Right ventricle myocardium superior (tissue), 1 donor: ENCODE measurements at regions of chr20 and their contacts with region 1.

Region 1: GRCh38 chr20:13765299-13765698 is 19.4 kb downstream of the ESF1 start:
- DNase-seq: no peak
- ATAC-seq: no peak

Region 2: DNA sequence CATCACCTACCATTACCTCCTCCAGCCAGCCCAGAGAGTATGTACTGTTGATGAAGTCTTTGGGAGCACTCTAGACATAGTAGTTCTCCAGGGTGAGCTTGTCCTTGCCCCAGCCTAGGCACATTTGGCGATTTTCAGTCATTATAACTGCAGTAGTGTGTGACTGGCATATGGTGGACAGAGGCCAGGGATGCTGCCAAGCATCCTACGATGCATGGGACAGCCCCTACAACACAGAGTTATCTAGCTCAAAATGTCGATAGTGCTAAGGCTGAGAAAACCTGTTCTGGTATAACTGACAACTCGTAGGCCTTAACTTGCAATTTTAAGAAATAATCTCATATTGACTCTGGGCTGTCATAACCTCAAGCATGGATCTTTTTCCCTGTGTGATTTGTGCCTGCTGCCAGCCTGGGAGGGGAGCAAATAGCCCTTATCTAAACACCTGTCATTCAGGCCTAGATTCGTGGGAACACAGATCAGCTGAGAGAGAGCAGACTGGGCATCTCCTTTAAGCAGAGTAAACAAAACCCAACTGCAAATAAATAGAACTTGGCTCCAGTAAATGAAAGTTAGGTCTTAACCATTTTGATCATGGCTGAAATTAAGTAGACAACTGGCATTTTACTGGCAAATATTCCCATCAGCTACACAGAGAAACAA is 653.9 kb before region 1 on chr20:
- intact Hi-C with region 1: loop called (anchors 5 kb)
- DNase-seq: no peak
- ATAC-seq: no peak

Region 3: GRCh38 chr20:13839421-13840092 is 74.3 kb after region 1 on chr20:
- intact Hi-C with region 1: no loop called
- DNase-seq: no peak
- ATAC-seq: no peak